Dendritic cell treated with granulocyte-macrophage colony-stimulating factor and Interleukin-4, amounts not matched to agents 40 ng/mL and 50 ng/mL, for 4 days (primary cell): ENCODE measurements at regions of chr5 and their contacts with region 1.

Region 1: GRCh38 chr5:154940772-154941620 is at the start of gene MRPL22:
- H3K4me3 Mint-ChIP-seq: peak within 1 kb of the TSS; percentile 99
- H3K27ac Mint-ChIP-seq: peak within 1 kb of the TSS; percentile 96
- H3K4me1 Mint-ChIP-seq: peaks cover 14% of the 10 kb centered on the region
- H3K27me3 Mint-ChIP-seq: no peaks in the 10 kb centered on the region

Region 2: DNA sequence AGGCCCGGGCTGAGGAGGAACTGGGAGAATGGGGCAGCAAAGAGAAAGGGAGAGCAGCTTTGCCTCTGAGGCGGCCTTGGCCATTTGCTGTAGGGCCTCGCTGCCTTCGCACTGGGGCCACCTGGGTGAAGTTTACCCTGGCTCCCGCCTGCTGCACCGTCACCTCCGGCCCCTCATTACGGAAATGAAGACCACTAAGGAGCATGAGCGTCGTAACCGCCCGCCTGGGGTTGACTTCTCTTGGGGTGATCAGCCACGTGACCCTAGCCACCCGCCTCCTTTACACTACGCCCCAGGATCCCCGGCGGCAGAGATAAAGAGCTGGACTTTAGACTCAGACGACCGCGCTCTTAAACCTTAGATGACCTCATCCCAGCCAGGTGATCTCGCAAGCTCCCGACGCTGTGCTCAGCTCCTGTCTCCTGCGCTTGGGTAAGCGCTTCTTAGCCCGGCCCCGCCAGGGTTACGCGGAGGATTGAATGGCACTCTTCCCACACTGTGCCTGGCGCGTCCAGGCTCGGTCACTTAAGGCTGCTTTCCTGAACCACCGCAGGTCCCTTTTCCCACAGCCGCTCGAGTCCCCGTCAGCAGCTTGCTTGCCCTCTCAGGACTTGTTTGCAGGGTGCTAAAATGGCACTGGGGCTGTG is 293.8 kb before region 1 on chr5:
- intact Hi-C with region 1: loop called (anchors 2 kb)
- H3K4me3 Mint-ChIP-seq: peak overlapping the region; percentile 79
- H3K27ac Mint-ChIP-seq: peak overlapping the region; percentile 19
- H3K4me1 Mint-ChIP-seq: peaks cover 26% of the 10 kb centered on the region
- H3K27me3 Mint-ChIP-seq: peaks cover 32% of the 10 kb centered on the region

Region 3: GRCh38 chr5:154754460-154755360 is 186.3 kb before region 1 on chr5:
- intact Hi-C with region 1: loop called (anchors 10 kb)
- H3K4me3 Mint-ChIP-seq: peak overlapping the region; percentile 95
- H3K27ac Mint-ChIP-seq: peak overlapping the region; percentile 96
- H3K4me1 Mint-ChIP-seq: peaks cover 45% of the 10 kb centered on the region
- H3K27me3 Mint-ChIP-seq: no peaks in the 10 kb centered on the region

Region 4: GRCh38 chr5:154857530-154858296 is 83.3 kb before region 1 on chr5:
- intact Hi-C with region 1: loop called (anchors 2 kb)
- H3K4me3 Mint-ChIP-seq: peak overlapping the region; percentile 99
- H3K27ac Mint-ChIP-seq: peak overlapping the region; percentile 98
- H3K4me1 Mint-ChIP-seq: peaks cover 42% of the 10 kb centered on the region
- H3K27me3 Mint-ChIP-seq: no peaks in the 10 kb centered on the region

Region 5: DNA sequence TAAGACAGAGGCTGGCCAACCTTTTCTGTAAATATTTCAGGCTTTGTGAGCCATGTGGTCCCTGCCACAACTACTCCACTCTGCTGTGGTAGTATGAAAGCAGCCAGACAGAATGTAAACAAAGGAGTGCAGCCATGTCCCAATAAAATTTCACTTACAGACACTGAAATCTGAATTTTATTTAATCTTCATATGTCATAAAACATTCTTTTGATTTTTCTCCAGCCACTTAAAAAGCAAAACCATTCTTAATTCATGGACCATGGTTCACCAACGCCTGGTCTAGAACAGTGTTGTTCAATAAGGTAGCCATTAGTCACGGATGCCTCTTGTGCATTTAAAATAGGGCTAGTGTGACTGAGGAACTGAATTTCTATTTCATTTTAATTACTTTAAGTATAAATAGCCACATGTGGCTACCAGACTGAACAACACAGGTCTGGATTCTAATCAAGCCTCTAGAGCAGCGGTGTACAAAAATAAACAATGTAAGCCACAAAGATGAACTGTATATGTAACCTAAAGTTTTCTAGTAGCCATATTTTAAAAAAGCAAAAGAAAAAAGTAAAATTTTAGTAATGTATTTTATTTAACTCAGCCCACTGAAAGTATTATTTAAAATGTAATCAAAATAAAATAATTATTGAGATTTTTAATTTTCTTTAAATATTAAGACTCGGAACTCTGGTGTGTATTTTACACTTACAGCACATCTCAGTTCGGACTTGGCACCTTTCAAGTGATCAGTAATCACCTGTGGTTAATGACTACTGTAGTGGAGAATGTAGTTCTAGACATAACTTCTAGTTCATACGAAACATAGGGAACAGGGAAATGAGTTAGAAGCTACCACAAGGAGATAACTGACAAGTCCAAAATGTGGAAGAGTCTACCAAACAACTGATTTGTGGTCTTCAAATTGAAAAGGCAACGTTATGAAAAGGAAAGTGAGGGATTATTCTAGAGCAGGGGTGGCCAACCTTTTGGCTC is 17.3 kb before region 1 on chr5:
- intact Hi-C with region 1: no loop called
- H3K4me3 Mint-ChIP-seq: no peak overlapping the region
- H3K27ac Mint-ChIP-seq: no peak overlapping the region
- H3K4me1 Mint-ChIP-seq: no peaks in the 10 kb centered on the region
- H3K27me3 Mint-ChIP-seq: no peaks in the 10 kb centered on the region

Region 6: GRCh38 chr5:155004138-155004744 is 63.2 kb after region 1 on chr5:
- intact Hi-C with region 1: loop called (anchors 2 kb)
- H3K4me3 Mint-ChIP-seq: no peak overlapping the region
- H3K27ac Mint-ChIP-seq: no peak overlapping the region
- H3K4me1 Mint-ChIP-seq: no peaks in the 10 kb centered on the region
- H3K27me3 Mint-ChIP-seq: peaks cover 7% of the 10 kb centered on the region

Region 7: GRCh38 chr5:155147222-155147621 is 206.2 kb after region 1 on chr5:
- intact Hi-C with region 1: loop called (anchors 10 kb)
- H3K4me3 Mint-ChIP-seq: no peak overlapping the region
- H3K27ac Mint-ChIP-seq: no peak overlapping the region
- H3K4me1 Mint-ChIP-seq: no peaks in the 10 kb centered on the region
- H3K27me3 Mint-ChIP-seq: peaks cover 4% of the 10 kb centered on the region